Thyroid gland (tissue), 4 donors: ENCODE measurements at regions of chr15 and their contacts with region 1.

Region 1: DNA sequence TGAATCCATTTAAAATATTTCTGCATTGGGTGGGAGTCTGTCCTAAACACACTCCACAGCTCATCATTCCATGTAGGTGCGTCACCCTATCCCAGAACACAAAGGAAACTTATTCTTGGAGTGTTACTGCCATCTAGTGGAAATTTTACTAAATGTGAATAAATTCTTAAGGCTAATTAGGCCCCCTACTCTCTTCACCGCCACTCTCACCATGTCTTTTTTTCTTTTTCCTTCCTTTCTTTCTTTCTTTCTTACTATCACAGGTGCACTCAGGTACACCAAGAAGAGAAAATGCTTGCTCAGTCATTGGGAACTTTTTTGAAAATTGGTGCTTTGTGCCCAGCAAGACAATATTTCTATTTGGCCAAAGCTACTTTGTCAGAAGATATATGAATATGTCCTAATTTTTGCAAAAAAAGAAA is 26.4 kb upstream of the ATP8B4 start:
- DNase-seq: peak; percentile 8 to 17
- H3K4me3 ChIP-seq: no peak overlapping the region
- H3K27ac ChIP-seq: no peak overlapping the region
- H3K4me1 ChIP-seq: peaks cover 0 to 5% of the 10 kb centered on the region in 2 donors
- H3K27me3 ChIP-seq: no peaks in the 10 kb centered on the region
- CTCF ChIP-seq: peak in 5 of 6 experiments; percentile 36 to 72 (median 65)
- POLR2A ChIP-seq: no peak

Region 2: GRCh38 chr15:48861813-48862431 is 1283.5 kb before region 1 on chr15:
- intact Hi-C with region 1: loop called (anchors 10 kb)
- DNase-seq: peak in 1 of 2 donors; percentile 9
- H3K4me3 ChIP-seq: no peak overlapping the region
- H3K27ac ChIP-seq: no peak overlapping the region
- H3K4me1 ChIP-seq: no peaks in the 10 kb centered on the region
- H3K27me3 ChIP-seq: no peaks in the 10 kb centered on the region
- CTCF ChIP-seq: peak; percentile 56 to 96 (median 83)
- POLR2A ChIP-seq: no peak

Region 3: GRCh38 chr15:49235446-49236124 is 909.9 kb before region 1 on chr15:
- intact Hi-C with region 1: loop called (anchors 10 kb)
- DNase-seq: peak; percentile 49 to 62
- H3K4me3 ChIP-seq: no peak overlapping the region
- H3K27ac ChIP-seq: no peak overlapping the region
- H3K4me1 ChIP-seq: peaks cover 0 to 11% of the 10 kb centered on the region in 2 donors
- H3K27me3 ChIP-seq: no peaks in the 10 kb centered on the region
- CTCF ChIP-seq: peak; percentile 18 to 91 (median 77)
- POLR2A ChIP-seq: no peak

Region 4: GRCh38 chr15:50066192-50066591 is 79.3 kb before region 1 on chr15:
- intact Hi-C with region 1: loop called (anchors 10 kb)
- DNase-seq: no peak
- H3K4me3 ChIP-seq: no peak overlapping the region
- H3K27ac ChIP-seq: no peak overlapping the region
- H3K4me1 ChIP-seq: no peaks in the 10 kb centered on the region
- H3K27me3 ChIP-seq: no peaks in the 10 kb centered on the region
- CTCF ChIP-seq: no peak
- POLR2A ChIP-seq: no peak